ENCODE measurements at regions of chr6 and their contacts with region 1.

Region 1: DNA sequence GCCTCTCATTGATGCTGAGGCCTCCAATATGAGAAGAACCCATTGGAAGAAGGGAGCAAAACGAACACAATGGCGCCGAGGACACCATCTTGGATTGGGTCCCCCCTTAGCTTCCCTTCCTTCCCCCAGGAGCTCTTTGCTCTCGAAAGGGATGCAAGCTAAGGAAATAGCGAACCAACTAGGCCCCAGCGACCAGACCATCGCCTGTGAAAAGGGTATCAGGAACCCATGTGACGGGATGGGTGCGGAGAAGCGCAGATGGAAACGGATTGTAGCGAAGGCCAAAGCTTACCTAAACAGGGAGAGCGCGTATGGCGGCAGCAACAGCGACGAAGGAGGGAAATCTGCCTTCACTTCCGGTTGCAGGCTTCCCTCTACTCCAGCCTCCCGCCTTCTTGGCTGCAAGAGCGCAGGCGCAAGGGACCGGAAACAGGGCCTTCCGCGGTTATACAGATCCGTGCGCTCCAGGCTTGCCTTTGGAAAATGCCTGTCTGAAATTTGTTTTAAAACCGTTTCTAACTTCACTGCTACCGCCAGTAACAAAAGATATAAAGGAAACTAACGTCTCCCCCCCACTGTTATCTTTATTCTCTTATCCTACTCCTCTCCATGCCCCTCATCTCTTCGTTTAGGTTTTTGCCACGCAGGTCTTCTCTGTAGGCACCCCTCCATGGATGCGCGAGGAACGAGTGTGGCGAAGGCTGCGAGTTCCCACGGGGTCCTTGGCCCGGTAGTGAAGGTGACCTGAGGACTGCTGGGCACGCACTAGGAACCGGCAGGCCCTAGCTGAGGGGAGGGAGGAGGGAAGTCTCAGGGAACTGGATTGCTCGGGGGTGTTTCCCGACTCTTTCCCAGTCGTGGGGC is at the start of gene DDX39B:
- DNase-seq: peak; percentile 93
- ATAC-seq: peak; percentile 66
- H3K4me3 Mint-ChIP-seq: peak within 1 kb of the TSS; percentile 99
- H3K27ac Mint-ChIP-seq: peak within 1 kb of the TSS; percentile 98
- H3K4me1 Mint-ChIP-seq: peaks cover 48% of the 10 kb centered on the region
- H3K27me3 Mint-ChIP-seq: no peaks in the 10 kb centered on the region
- CTCF ChIP-seq: no peak
- total RNA-seq, gene DDX39B: 704 to 738 TPM (median 712 TPM) in 3 replicates

Region 2: DNA sequence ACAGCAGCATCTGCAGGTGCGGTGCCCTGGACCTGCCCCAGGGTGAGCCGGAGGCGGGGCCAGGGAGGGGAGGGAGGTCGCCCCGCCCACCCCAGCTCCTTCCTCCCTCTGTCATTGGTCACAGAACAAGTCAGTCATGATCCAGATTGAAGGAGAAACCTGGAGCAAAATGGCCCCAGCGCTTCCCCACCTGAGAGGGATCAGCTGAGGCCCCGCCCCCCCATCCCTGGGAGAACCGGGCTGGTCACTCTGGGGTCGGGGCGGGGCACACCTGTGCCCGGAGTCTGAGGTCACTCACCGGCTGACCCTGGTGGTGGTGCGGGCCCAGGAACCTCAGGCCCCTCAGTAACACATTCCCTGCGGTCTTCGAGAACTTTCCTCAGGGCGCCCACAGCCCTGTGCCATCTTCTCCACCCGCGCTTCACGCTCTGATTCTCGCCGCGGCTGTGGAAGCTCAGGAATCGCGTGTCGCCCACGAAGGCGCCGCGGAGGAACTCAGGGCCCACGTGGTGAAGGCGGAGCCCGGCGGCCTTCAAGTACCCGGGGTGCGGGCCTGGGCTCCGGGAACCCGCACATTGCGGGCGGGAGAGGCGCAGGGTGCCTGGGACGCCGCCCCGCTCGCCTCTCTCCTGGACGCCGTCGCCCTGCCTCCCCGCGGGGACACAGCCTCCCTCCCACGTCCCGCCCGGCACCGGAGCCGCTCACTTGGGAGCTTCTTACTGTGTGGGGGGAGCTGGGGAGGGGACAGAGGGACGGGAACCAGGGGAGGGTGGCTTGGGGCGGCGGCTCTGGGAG is 233.6 kb before region 1 on chr6:
- CTCF ChIA-PET with region 1: no interaction called
- POLR2A ChIA-PET with region 1: no interaction called
- DNase-seq: peak; percentile 88
- ATAC-seq: peak; percentile 97
- H3K4me3 Mint-ChIP-seq: peak overlapping the region; percentile 72
- H3K27ac Mint-ChIP-seq: no peak overlapping the region
- H3K4me1 Mint-ChIP-seq: no peaks in the 10 kb centered on the region
- H3K27me3 Mint-ChIP-seq: peaks cover 50% of the 10 kb centered on the region
- CTCF ChIP-seq: no peak

Region 3: DNA sequence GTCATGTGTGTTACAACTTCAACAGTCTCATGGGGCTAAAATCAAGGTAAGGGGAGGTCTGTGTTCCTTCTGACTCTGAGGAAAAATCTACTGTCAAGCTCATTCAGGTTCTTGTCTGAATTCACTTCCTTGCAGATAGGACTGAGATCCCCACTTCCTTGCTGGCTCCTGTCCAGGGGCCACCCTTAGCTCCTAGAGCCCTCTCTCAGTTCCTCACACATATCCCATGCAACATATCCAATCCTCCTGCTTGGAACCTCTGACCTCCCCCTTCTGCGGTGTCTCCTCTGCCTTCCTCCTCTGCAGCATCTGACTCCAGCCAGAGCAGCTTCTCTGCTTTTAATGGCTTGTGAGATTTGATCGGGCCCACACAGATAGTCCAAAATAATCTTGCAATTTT is 71.1 kb before region 1 on chr6:
- CTCF ChIA-PET with region 1: no interaction called
- POLR2A ChIA-PET with region 1: no interaction called
- DNase-seq: no peak
- ATAC-seq: no peak
- H3K4me3 Mint-ChIP-seq: no peak overlapping the region
- H3K27ac Mint-ChIP-seq: no peak overlapping the region
- H3K4me1 Mint-ChIP-seq: no peaks in the 10 kb centered on the region
- H3K27me3 Mint-ChIP-seq: peaks cover 24% of the 10 kb centered on the region
- CTCF ChIP-seq: no peak

Region 4: GRCh38 chr6:31493875-31494694 is 47.8 kb before region 1 on chr6:
- CTCF ChIA-PET with region 1: interaction called, 6 read pairs
- POLR2A ChIA-PET with region 1: interaction called, 22 read pairs
- DNase-seq: peak; percentile 92
- ATAC-seq: peak; percentile 67
- H3K4me3 Mint-ChIP-seq: peak overlapping the region; percentile 91
- H3K27ac Mint-ChIP-seq: peak overlapping the region; percentile 91
- H3K4me1 Mint-ChIP-seq: peaks cover 57% of the 10 kb centered on the region
- H3K27me3 Mint-ChIP-seq: peaks cover 30% of the 10 kb centered on the region
- CTCF ChIP-seq: peak; percentile 73

Region 5: GRCh38 chr6:31529329-31530150 is 12.3 kb before region 1 on chr6:
- CTCF ChIA-PET with region 1: interaction called, 10 read pairs
- POLR2A ChIA-PET with region 1: interaction called, 17 read pairs
- DNase-seq: no peak
- ATAC-seq: peak; percentile 31
- H3K4me3 Mint-ChIP-seq: no peak overlapping the region
- H3K27ac Mint-ChIP-seq: peak overlapping the region; percentile 65; the same call in 1 of the 2 replicates
- H3K4me1 Mint-ChIP-seq: peaks cover 36% of the 10 kb centered on the region
- H3K27me3 Mint-ChIP-seq: no peaks in the 10 kb centered on the region
- CTCF ChIP-seq: no peak

Measured in WTC11 (cell line).